A549 (cell line): ENCODE measurements at regions of chr3 and their contacts with region 1.

Region 1: DNA sequence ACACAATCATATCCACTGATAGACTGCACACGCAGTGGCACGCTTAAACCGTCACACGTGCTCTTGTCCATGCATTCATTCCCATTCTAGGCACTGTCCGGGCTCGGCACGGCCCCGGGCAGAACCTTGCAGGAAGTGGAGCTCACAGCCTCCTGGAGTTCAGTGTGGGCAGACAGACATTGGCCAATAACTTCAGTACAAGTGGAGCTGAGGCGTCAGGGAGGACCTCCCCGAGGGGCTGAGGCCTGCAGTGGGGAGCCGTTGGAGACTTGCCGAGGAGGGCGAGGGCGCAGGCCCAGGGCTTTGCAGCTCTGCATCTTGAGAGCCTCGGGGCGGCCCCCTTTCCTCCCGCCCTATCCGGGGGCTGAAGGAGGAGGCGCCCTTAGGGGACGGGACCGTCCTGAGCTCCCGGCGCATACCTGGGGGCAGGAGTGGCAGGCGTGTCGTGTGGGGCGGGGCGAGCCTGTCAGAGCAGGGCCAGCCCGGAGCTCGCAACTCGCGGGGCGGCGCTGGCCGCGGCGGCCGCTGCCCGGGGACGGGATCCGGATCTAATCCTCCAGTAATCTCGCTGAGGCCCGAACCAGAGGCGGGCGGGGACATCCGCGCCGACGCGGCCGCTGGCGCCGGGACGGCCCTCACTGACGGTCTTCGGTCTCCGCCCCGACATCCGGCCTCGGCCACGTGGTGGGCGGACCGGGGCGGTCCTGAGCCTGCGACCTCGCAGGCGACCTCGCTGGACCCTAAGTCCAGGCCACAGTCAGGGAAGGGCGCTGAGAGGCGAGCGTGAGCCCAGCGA is at the start of gene ACY1:
- DNase-seq: peak; percentile 81 to 84
- ATAC-seq: peak; percentile 71 to 87
- H3K4me3 ChIP-seq: peak within 1 kb of the TSS; percentile 51
- H3K27ac ChIP-seq: peak within 1 kb of the TSS; percentile 80 to 97
- H3K4me1 ChIP-seq: peaks cover 32% of the 10 kb centered on the region
- CTCF ChIP-seq: peak; percentile 6; the same call in 1 of the 3 replicates
- EP300 ChIP-seq: no peak
- POLR2A ChIP-seq: peak; percentile 43
- RAD21 ChIP-seq: no peak
- polyA plus RNA-seq, gene ACY1: 21.1 and 25.1 TPM in 2 replicates

Region 2: GRCh38 chr3:51830836-51831385 is 152.1 kb before region 1 on chr3:
- CTCF ChIA-PET with region 1: no interaction called
- POLR2A ChIA-PET with region 1: no interaction called
- DNase-seq: no peak
- ATAC-seq: no peak
- H3K4me3 ChIP-seq: no peak overlapping the region
- H3K27ac ChIP-seq: no peak overlapping the region
- H3K4me1 ChIP-seq: no peaks in the 10 kb centered on the region
- CTCF ChIP-seq: no peak
- EP300 ChIP-seq: no peak
- POLR2A ChIP-seq: no peak
- RAD21 ChIP-seq: no peak

Region 3: DNA sequence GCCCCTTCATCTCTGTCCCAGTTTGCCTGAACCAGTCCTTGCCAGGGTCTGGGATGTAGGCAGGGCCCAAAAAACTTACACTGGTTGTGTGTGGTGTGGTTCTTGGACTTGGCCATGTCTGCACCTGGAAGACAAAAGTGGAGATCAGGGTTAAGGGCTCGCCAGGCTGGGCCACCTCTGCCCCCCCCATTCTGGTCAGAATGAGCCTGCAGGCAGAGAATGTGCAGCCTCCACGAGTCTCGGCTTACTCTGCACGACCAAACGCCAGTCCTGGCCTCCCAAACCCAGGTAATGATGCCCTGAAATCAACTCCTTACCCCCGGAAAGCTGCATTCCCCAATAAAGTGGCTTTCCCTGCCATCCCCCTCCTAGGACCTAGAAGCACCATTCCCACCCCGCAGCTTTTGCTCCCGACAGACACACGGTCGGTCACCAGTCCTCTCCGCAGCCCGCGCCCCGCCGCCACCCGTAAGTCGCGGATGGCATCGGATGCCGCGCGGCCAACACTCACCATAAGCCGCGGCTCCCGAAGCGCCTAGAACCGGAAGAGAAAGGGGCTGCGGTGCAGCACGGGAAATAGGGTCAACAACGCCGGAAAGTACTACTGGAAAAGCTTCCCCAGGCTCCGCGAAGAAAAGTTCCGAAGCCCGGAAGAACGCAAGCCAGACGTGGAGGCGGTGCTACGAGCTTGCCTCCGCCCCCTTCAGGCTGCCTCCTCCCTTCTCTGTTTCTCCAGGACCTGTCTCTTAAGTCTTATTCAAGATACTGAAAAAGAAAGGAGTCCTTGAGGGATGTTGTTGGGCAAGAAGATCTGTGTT is 12.6 kb after region 1 on chr3 and contains the start of gene RPL29:
- CTCF ChIA-PET with region 1: interaction called, 13 read pairs
- POLR2A ChIA-PET with region 1: interaction called, 32 read pairs
- DNase-seq: peak; percentile 88 to 92
- ATAC-seq: peak; percentile 91 to 94
- H3K4me3 ChIP-seq: peak within 1 kb of the TSS; percentile 90
- H3K27ac ChIP-seq: peak within 1 kb of the TSS; percentile 92 to 97
- H3K4me1 ChIP-seq: peaks cover 31% of the 10 kb centered on the region; the same call in 2 of the 3 replicates
- CTCF ChIP-seq: no peak
- EP300 ChIP-seq: no peak
- POLR2A ChIP-seq: peak; percentile 78
- RAD21 ChIP-seq: 0 out of 5 replicates have a peak, but pooled peaks of 1 of the 2 experiments have one; percentile 10
- polyA plus RNA-seq, gene RPL29: 808 and 909 TPM in 2 replicates